Esophagus squamous epithelium (tissue), 5 donors: ENCODE measurements at regions of chr17 and their contacts with region 1.

Region 1: GRCh38 chr17:31015639-31016038 is 44.8 kb downstream of the RNF135 start:
- DNase-seq: no peak
- H3K4me3 ChIP-seq: no peak overlapping the region
- H3K27ac ChIP-seq: no peak overlapping the region
- H3K4me1 ChIP-seq: no peaks in the 10 kb centered on the region
- H3K27me3 ChIP-seq: no peaks in the 10 kb centered on the region
- CTCF ChIP-seq: no peak
- POLR2A ChIP-seq: no peak

Region 2: DNA sequence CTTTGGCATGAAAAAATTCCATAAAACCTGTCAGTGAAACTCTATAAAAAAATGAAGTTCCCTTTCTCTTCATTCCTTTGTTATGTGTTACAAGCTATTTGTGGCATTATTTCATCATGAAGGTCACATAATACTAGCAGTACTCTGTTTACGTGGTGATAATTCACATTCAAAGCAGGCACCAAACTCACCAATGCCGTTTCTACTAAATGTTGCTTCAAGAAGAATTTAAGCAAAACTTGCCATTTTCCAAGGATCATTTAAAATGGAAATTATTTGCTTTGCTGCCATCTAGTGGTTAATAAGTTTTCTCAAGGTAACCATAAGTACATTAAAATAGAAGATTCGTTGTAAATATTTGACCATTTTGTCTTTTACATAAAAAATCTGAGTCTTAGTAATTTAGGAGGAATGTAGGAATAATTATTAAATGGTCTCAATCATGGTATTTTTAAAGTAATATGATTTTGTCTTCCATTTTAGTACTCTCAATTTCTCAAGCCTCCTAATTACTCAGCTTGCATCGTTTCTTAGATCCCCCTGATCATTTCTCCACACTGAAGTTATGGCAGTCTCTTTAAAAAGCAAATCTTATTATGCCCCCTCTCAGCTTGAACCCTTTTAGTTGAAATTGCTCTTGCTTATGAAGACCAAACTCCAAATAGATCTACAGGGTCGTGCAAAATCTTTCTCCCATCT is 200.6 kb after region 1 on chr17:
- intact Hi-C with region 1: loop called (anchors 10 kb)
- DNase-seq: no peak
- H3K4me3 ChIP-seq: no peak overlapping the region
- H3K27ac ChIP-seq: no peak overlapping the region
- H3K4me1 ChIP-seq: no peaks in the 10 kb centered on the region
- H3K27me3 ChIP-seq: no peaks in the 10 kb centered on the region
- CTCF ChIP-seq: peak; percentile 42 to 74 (median 54)
- POLR2A ChIP-seq: no peak